SK-N-SH (cell line): ENCODE measurements at regions of chr3 and their contacts with region 1.

Region 1: GRCh38 chr3:179322286-179323196 is at the start of gene ZNF639:
- DNase-seq: peak; percentile 99
- H3K4me3 ChIP-seq: peak within 1 kb of the TSS; percentile 77 to 97
- H3K27ac ChIP-seq: peak within 1 kb of the TSS; percentile 81 to 89
- H3K4me1 ChIP-seq: peaks cover 0 to 6% of the 10 kb centered on the region in 2 experiments; a peak in 2 of 4 replicates
- H3K27me3 ChIP-seq: no peaks in the 10 kb centered on the region
- CTCF ChIP-seq: peak; percentile 73
- EP300 ChIP-seq: peak in 1 of 2 experiments; percentile 46; a peak in 1 of 4 replicates
- RAD21 ChIP-seq: peak; percentile 46
- polyA plus RNA-seq, gene ZNF639: 9.6 and 11.4 TPM in 2 replicates

Region 2: GRCh38 chr3:179108086-179108485 is 214.5 kb before region 1 on chr3:
- CTCF ChIA-PET with region 1: interaction called, 24 read pairs
- POLR2A ChIA-PET with region 1: no interaction called
- DNase-seq: no peak
- H3K4me3 ChIP-seq: no peak overlapping the region
- H3K27ac ChIP-seq: peak overlapping the region in 1 of 2 experiments; percentile 68; a peak in 2 of 4 replicates
- H3K4me1 ChIP-seq: no peaks in the 10 kb centered on the region; a peak in 1 of 4 replicates
- H3K27me3 ChIP-seq: no peaks in the 10 kb centered on the region
- CTCF ChIP-seq: no peak
- EP300 ChIP-seq: no peak
- RAD21 ChIP-seq: no peak

Region 3: DNA sequence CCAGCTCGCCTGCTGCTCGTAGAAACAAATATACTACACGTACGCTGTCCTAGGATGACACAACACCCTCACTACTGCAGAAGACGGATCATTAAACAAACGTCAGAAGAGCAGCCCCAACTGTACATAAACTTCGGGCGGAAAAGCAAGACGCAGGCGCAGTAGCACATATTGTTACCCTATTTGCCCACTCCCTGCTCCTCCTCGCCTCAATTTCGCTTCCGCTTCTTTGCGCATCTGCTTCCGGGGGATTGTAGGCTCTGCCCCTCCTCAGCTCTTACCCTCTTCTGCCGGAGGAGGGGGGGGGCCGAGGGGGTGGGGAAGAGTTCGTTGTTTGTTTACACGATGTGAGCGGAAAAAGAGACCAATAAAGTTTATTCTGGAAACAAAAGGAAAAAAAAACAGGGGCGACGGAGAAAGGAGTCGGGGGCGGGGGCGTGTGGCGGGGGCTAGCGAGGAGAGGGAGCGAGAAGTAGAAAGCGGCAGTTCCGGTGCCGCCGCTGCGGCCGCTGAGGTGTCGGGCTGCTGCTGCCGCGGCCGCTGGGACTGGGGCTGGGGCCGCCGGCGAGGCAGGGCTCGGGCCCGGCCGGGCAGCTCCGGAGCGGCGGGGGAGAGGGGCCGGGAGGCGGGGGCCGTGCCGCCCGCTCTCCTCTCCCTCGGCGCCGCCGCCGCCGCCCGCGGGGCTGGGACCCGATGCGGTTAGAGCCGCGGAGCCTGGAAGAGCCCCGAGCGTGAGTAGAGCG is 174.5 kb before region 1 on chr3 and contains the start of gene PIK3CA:
- CTCF ChIA-PET with region 1: interaction called, 20 read pairs
- POLR2A ChIA-PET with region 1: no interaction called
- DNase-seq: peak; percentile 91
- H3K4me3 ChIP-seq: peak within 1 kb of the TSS; percentile 72 to 95
- H3K27ac ChIP-seq: peak within 1 kb of the TSS; percentile 83 to 94
- H3K4me1 ChIP-seq: peaks cover 4 to 7% of the 10 kb centered on the region in 2 experiments; a peak in 3 of 4 replicates
- H3K27me3 ChIP-seq: no peaks in the 10 kb centered on the region
- CTCF ChIP-seq: no peak
- EP300 ChIP-seq: no peak
- RAD21 ChIP-seq: no peak
- polyA plus RNA-seq, gene PIK3CA: 3.2 and 3.9 TPM in 2 replicates

Region 4: GRCh38 chr3:179653096-179653797 is 330.7 kb after region 1 on chr3:
- CTCF ChIA-PET with region 1: no interaction called
- POLR2A ChIA-PET with region 1: no interaction called
- DNase-seq: peak; percentile 82
- H3K4me3 ChIP-seq: peak overlapping the region; percentile 80 to 95
- H3K27ac ChIP-seq: peak overlapping the region; percentile 90 to 93
- H3K4me1 ChIP-seq: peaks cover 4 to 10% of the 10 kb centered on the region in 2 experiments; a peak in 2 of 4 replicates
- H3K27me3 ChIP-seq: no peaks in the 10 kb centered on the region
- CTCF ChIP-seq: peak; percentile 11; the same call in 1 of the 2 replicates
- EP300 ChIP-seq: 0 out of 4 replicates have a peak, but pooled peaks of 1 of the 2 experiments have one; percentile 16
- RAD21 ChIP-seq: peak; percentile 46